Stomach (tissue), 19 donors: ENCODE measurements at regions of chr4 and their contacts with region 1.

Region 1: DNA sequence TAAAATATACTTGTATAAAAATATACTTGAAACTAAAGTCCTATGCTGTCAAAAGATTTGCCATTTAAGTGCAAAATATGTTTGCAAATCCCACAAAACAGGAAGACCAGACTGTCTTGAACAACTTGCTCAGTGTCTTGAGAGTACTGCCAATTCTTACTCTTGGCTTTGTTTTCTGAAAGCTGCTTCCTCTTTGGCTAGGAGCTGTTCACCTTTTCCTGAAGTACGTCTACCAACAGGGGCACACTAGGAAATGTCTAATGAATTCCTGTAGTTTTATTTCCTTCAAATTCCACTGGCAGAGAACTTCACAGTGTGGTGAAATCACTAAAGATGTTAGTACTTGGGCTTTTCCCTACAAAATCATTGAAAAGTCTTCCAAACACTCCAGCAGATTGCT is 46.4 kb upstream of the ABCG2 start:
- DNase-seq: no peak
- H3K4me3 ChIP-seq: no peak overlapping the region
- H3K27ac ChIP-seq: peak overlapping the region in 1 of 5 donors; percentile 25
- H3K4me1 ChIP-seq: peaks cover 0 to 6% (median 1%) of the 10 kb centered on the region in 4 donors
- H3K27me3 ChIP-seq: no peaks in the 10 kb centered on the region
- CTCF ChIP-seq: no peak
- EP300 ChIP-seq: no peak
- POLR2A ChIP-seq: no peak

Region 2: DNA sequence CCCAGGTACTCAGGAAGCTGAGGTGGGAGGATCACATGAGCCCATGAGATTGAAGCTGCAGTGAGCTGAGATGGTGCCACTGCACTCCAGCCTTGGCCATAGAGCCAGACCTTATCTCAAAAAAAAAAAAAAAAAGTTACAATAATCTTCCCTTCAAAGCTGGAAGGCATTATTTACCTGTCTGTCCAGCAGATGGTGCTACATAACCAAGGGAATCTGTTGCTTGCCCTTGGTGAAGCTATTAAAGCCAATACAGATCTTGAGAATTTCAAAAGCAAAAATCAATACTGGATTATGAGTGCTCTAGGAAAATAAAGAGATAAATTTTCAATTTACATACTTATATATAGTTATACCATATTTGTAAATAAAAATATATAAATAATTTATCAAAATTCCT is 171.6 kb before region 1 on chr4:
- intact Hi-C with region 1: loop called (anchors 5 kb)
- DNase-seq: peak; percentile 31 to 87
- H3K4me3 ChIP-seq: no peak overlapping the region
- H3K27ac ChIP-seq: no peak overlapping the region
- H3K4me1 ChIP-seq: peaks cover 0 to 10% (median 0%) of the 10 kb centered on the region in 4 donors
- H3K27me3 ChIP-seq: no peaks in the 10 kb centered on the region
- CTCF ChIP-seq: peak in 5 of 7 experiments; percentile 51 to 74 (median 64)
- EP300 ChIP-seq: no peak
- POLR2A ChIP-seq: no peak

Region 3: DNA sequence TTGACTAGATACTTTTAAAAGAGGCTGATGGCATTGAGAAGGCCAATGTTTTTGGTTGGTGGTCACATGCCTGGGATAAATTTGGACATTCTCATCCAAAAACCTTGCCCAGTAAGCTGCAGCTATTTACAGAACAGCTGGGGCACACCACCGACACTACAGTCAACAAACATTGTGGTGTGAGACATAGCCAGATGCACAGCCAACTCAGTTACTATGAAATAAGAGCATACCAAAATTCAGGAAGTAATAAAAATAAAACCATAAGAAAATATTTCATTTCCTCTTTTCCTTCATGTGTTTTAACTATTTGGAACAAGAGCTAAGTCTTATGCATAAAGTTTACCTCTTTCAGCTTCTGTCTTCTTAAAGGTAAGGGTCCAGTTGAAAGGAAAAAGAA is 70.6 kb after region 1 on chr4:
- intact Hi-C with region 1: no loop called
- DNase-seq: no peak
- H3K4me3 ChIP-seq: no peak overlapping the region
- H3K27ac ChIP-seq: no peak overlapping the region
- H3K4me1 ChIP-seq: peaks cover 3 to 34% (median 24%) of the 10 kb centered on the region in 4 donors
- H3K27me3 ChIP-seq: no peaks in the 10 kb centered on the region
- CTCF ChIP-seq: no peak
- EP300 ChIP-seq: no peak
- POLR2A ChIP-seq: no peak